Caco-2 (cell line): ENCODE measurements at regions of chr17 and their contacts with region 1.

Region 1: DNA sequence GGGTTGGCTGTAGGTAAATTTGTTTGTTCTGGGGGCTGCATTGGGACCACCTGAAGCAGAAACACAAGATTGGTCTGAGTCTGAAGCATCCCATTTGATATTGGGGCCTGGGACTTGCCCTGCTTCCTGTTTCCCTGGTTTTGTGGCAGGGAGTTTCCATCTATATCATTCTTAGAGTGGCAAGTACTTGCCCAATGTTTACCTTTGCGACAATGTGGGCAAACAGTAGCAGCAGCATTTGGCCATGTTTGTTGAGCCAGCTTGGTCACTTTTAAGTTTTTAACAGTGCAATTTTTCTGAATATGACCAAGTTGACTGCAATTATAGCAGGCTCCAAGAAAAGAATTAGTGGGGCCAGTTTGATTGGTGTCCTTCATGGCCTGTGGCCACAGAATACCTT is 61.8 kb downstream of the LGALS9 start:
- DNase-seq: peak in 1 of 2 experiments; percentile 21
- H3K4me3 ChIP-seq: no peak overlapping the region
- H3K4me3 Mint-ChIP-seq: no peak overlapping the region
- H3K27ac Mint-ChIP-seq: no peak overlapping the region
- H3K4me1 ChIP-seq: peaks cover 13% of the 10 kb centered on the region
- H3K4me1 Mint-ChIP-seq: peaks cover 15% of the 10 kb centered on the region
- H3K27me3 ChIP-seq: no peaks in the 10 kb centered on the region
- H3K27me3 Mint-ChIP-seq: no peaks in the 10 kb centered on the region
- CTCF ChIP-seq: no peak

Region 2: DNA sequence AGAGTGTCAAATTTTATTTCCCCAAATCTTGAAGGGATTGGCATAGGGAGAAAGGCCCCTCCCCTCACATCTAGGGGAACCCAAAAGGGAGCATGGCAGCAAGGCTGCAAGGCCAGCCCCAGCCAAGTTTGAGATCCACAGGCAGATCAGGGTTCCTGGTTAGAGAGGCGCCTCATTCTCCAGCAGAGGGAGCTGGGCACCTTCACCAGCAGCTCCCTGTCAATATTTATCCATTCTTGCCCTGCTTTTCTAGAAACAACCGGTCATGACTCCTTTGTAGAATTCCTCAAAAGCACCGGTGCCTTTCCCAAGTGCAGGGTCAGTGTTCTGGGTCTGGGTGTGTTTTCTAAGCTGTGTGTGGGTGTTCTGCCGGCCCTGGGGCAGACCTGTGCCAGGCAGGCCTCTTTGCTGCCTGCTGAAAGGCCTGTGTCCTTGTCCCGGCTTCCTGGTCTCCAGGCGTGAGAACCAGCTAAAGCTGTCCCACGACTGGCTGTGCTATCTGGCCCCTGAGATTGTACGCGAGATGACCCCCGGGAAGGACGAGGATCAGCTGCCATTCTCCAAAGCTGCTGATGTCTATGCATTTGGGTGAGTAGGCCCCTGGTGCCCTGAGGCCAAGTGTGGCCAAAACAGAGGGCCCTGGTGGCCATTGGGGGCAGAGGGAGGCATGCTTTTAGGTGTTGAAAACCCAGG is 83.0 kb before region 1 on chr17:
- CTCF ChIA-PET with region 1: no interaction called
- POLR2A ChIA-PET with region 1: no interaction called
- intact Hi-C with region 1: loop called (anchors 5 kb)
- DNase-seq: peak; percentile 75 to 79
- H3K4me3 ChIP-seq: no peak overlapping the region
- H3K4me3 Mint-ChIP-seq: no peak overlapping the region
- H3K27ac Mint-ChIP-seq: no peak overlapping the region
- H3K4me1 ChIP-seq: no peaks in the 10 kb centered on the region
- H3K4me1 Mint-ChIP-seq: no peaks in the 10 kb centered on the region
- H3K27me3 ChIP-seq: no peaks in the 10 kb centered on the region
- H3K27me3 Mint-ChIP-seq: no peaks in the 10 kb centered on the region
- CTCF ChIP-seq: peak; percentile 84 to 99